HCT116 (cell line): ENCODE measurements at regions of chr15 and their contacts with region 1.

Region 1: DNA sequence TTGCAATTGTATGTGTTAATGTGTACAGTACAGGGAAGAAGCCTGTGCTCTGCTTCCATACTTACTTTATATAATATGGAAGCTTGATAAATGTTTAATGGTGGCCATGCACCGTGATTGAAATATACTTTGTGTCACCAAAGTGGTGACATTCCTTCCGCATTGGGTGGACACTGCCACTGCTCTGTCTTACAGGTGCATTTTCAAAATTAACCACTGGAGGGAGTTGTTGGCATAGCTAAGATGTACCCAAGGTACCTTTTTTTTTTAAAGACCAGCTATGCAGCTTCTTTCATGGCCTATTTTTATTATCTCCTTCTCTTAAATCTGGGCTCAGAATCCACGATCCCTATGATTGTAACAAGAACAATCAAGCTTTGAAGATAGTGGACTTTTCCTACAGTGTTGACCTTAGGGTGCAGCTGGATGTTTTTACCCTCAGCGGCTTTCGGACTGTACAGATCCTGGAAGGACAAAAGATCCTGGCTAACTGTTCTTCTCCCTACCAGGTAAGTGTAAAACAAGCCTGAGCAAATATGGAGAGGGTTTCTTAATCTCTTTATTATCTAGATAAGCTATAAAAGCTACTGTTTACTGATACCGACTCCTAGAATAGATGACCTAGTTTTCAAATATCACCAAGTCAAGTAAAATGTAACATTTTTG is 21.6 kb upstream of the PAK6 start:
- DNase-seq: peak; percentile 68
- ATAC-seq: peak; percentile 99
- H3K4me3 ChIP-seq: no peak overlapping the region
- H3K27ac ChIP-seq: peak overlapping the region; percentile 32; the same call in 1 of the 2 replicates
- H3K4me1 ChIP-seq: 0 out of 4 replicates have a peak, but pooled peaks cover 0 to 3% of the 10 kb centered on the region in 2 experiments
- H3K27me3 ChIP-seq: no peaks in the 10 kb centered on the region
- CTCF ChIP-seq: peak; percentile 65 to 99 (median 86)
- POLR2A ChIP-seq: no peak
- RAD21 ChIP-seq: peak; percentile 91

Region 2: GRCh38 chr15:38699633-38700230 is 1517.6 kb before region 1 on chr15:
- CTCF ChIA-PET with region 1: no interaction called
- POLR2A ChIA-PET with region 1: no interaction called
- RAD21 ChIA-PET with region 1: no interaction called
- intact Hi-C with region 1: loop called (anchors 10 kb)
- DNase-seq: peak; percentile 54
- ATAC-seq: peak; percentile 89
- H3K4me3 ChIP-seq: no peak overlapping the region
- H3K27ac ChIP-seq: no peak overlapping the region
- H3K4me1 ChIP-seq: peaks cover 3 to 10% of the 10 kb centered on the region in 2 experiments; a peak in 1 of 4 replicates
- H3K27me3 ChIP-seq: no peaks in the 10 kb centered on the region
- CTCF ChIP-seq: peak; percentile 37 to 93 (median 92); a peak in 5 of 6 replicates
- POLR2A ChIP-seq: no peak
- RAD21 ChIP-seq: peak; percentile 51

Region 3: DNA sequence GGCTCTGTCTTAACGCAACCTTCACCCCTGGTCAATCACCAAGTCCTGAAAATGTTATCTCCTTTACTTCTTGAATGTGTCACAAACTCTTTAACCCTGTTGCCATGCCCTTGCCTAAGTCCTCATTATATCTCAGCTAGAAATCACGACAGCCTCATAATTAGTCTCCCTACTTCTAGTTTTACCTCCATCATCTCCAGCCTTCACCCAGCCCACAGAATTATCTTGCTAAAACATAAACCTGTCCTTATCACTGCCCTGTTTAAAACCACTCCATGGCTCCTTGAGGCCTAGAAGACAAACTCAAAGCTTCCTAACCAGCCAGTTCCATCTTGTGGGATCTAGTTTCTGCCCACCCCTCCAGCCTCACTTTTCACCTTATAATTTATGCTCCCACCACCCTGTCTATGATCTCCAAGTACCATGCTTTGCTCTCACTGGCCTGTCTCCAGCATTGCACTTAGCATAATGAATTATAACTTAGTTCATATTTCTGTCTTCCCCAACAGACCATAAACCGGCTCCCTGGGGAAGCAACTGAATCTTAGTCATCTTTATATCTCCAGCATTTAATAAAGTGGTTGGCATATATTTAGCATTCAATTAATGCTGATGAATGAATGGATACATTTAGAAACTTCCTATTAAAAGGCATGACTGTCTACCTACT is 336.4 kb before region 1 on chr15:
- CTCF ChIA-PET with region 1: no interaction called
- POLR2A ChIA-PET with region 1: no interaction called
- RAD21 ChIA-PET with region 1: no interaction called
- intact Hi-C with region 1: no loop called
- DNase-seq: no peak
- ATAC-seq: no peak
- H3K4me3 ChIP-seq: no peak overlapping the region
- H3K27ac ChIP-seq: no peak overlapping the region
- H3K4me1 ChIP-seq: peaks cover 0 to 6% of the 10 kb centered on the region in 2 experiments; a peak in 1 of 4 replicates
- H3K27me3 ChIP-seq: no peaks in the 10 kb centered on the region
- CTCF ChIP-seq: no peak
- POLR2A ChIP-seq: no peak
- RAD21 ChIP-seq: no peak

Region 4: DNA sequence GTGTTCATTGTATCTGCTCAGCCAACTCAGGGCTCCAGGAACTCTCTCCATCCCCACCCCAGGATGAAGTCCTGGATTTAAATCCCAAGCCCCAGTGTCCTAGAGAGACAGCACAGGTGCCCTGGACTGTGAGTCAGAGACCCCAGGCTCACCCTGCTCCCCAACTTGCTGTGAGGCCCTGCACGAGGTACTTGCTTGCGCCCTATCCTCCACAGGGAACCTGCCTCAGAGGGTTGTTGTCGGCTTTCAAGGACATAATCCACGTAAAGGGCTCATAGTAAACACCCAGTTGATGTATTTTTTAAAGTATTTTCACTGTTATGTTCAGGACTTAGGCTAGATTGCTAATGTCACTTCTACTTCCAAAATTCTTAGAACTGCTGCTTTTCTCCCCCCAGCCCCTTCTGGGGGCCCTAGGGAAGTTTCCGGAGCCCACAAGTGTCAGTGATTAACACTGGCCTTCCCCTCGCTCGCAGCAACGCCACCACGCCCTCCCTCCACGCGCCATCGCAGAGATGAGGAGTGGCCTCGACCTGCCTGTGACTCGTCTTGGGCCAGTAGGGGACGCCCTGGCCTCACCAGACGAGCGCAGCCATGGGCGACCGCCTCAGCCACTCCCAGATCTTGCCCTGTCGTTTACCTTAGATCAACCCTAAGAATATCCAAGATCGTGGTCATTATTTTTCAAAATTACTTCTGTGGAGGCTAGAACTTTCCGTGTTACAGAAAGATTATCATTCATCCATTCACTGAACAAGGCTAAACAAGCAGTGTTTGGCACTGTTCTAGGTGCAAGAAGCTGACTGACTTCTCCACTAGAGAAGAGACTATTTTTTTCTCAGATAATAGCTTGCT is 172.3 kb before region 1 on chr15:
- CTCF ChIA-PET with region 1: interaction called, 37 read pairs
- POLR2A ChIA-PET with region 1: no interaction called
- RAD21 ChIA-PET with region 1: interaction called in 1 of 2 experiments, 3 read pairs
- intact Hi-C with region 1: loop called (anchors 1 kb)
- DNase-seq: peak; percentile 46
- ATAC-seq: peak; percentile 100
- H3K4me3 ChIP-seq: peak overlapping the region; percentile 14 to 21
- H3K27ac ChIP-seq: no peak overlapping the region
- H3K4me1 ChIP-seq: peaks cover 21 to 43% of the 10 kb centered on the region in 2 experiments
- H3K27me3 ChIP-seq: no peaks in the 10 kb centered on the region
- CTCF ChIP-seq: peak; percentile 84 to 97 (median 96)
- POLR2A ChIP-seq: no peak
- RAD21 ChIP-seq: peak; percentile 98

Region 5: GRCh38 chr15:40238532-40239403 is 21.5 kb after region 1 on chr15 and contains the start of gene PAK6:
- CTCF ChIA-PET with region 1: interaction called, 10 read pairs
- POLR2A ChIA-PET with region 1: no interaction called
- RAD21 ChIA-PET with region 1: no interaction called
- intact Hi-C with region 1: no loop called
- DNase-seq: peak; percentile 51
- ATAC-seq: peak; percentile 94
- H3K4me3 ChIP-seq: peak within 1 kb of the TSS; percentile 21 to 53
- H3K27ac ChIP-seq: peak within 1 kb of the TSS; percentile 12; the same call in 1 of the 2 replicates
- H3K4me1 ChIP-seq: peaks cover 10 to 46% of the 10 kb centered on the region in 2 experiments
- H3K27me3 ChIP-seq: no peaks in the 10 kb centered on the region
- CTCF ChIP-seq: no peak
- POLR2A ChIP-seq: no peak
- RAD21 ChIP-seq: no peak
- total RNA-seq, gene PAK6: 19.9 TPM

Region 6: GRCh38 chr15:40307421-40308211 is 90.3 kb after region 1 on chr15 and contains the start of gene PLCB2:
- CTCF ChIA-PET with region 1: interaction called, 22 read pairs
- POLR2A ChIA-PET with region 1: no interaction called
- RAD21 ChIA-PET with region 1: interaction called in 1 of 2 experiments, 3 read pairs
- intact Hi-C with region 1: loop called (anchors 1 kb)
- DNase-seq: no peak
- ATAC-seq: peak; percentile 52
- H3K4me3 ChIP-seq: no peak within 1 kb of the TSS
- H3K27ac ChIP-seq: no peak within 1 kb of the TSS
- H3K4me1 ChIP-seq: peaks cover 2 to 14% of the 10 kb centered on the region in 2 experiments; a peak in 1 of 4 replicates
- H3K27me3 ChIP-seq: 0 out of 2 replicates have a peak, but pooled peaks cover 6% of the 10 kb centered on the region
- CTCF ChIP-seq: peak in 2 of 3 experiments; percentile 30 to 44; a peak in 3 of 6 replicates
- POLR2A ChIP-seq: no peak
- RAD21 ChIP-seq: no peak
- total RNA-seq, gene PLCB2: 2.8 TPM

Region 7: DNA sequence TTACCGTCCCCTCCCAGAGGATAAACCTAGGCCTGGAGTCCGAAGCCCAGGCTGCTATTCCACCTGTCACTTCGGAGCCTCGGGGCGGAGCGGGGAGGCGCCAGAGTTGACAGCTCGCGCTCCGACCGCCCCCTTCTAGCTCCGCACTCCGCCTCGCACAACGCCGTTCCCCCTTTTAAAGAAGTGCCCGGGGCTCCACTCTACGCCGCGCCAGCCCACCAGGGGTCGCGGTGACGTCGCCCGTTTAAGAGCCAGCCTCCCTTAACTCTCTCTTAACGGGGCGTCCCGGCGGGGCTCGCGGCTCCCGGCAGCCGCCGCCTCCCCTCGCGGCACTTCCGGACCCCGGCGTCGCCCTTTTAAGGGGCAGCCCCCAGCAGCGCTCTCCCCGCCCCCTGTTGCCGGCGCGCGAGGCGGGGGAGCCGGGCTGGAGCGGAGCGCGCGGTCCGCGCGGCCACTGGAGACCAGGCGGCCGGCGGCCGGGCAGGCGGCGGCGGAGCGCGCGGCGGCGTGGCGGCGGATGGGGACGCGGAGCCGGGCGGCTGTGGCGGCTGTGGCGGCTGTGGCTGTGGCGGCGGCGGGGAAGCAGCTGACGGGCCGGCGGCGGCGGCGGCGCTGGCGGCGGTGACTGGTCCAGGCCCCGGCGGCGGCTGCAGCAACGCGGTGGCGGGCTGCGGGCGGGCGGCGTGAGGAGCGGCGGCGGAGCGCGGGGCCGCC is 106.1 kb after region 1 on chr15 and contains the start of gene INAFM2:
- CTCF ChIA-PET with region 1: no interaction called
- POLR2A ChIA-PET with region 1: no interaction called
- RAD21 ChIA-PET with region 1: no interaction called
- intact Hi-C with region 1: no loop called
- DNase-seq: peak; percentile 81
- ATAC-seq: peak; percentile 92
- H3K4me3 ChIP-seq: peak within 1 kb of the TSS; percentile 47 to 58
- H3K27ac ChIP-seq: peak within 1 kb of the TSS; percentile 39; the same call in 1 of the 2 replicates
- H3K4me1 ChIP-seq: peaks cover 4 to 18% of the 10 kb centered on the region in 2 experiments; a peak in 3 of 4 replicates
- H3K27me3 ChIP-seq: no peaks in the 10 kb centered on the region
- CTCF ChIP-seq: peak in 2 of 3 experiments; percentile 27 to 45; a peak in 4 of 6 replicates
- POLR2A ChIP-seq: no peak
- RAD21 ChIP-seq: no peak
- total RNA-seq, gene INAFM2: 8.8 TPM